ENCODE measurements at regions of chr2 and their contacts with region 1.

Region 1: GRCh38 chr2:96760036-96760985 is at the start of gene CNNM4:
- DNase-seq: peak; percentile 96
- ATAC-seq: peak; percentile 85
- H3K4me3 Mint-ChIP-seq: peak within 1 kb of the TSS; percentile 67
- H3K27ac Mint-ChIP-seq: peak within 1 kb of the TSS; percentile 91
- H3K4me1 Mint-ChIP-seq: peaks cover 51% of the 10 kb centered on the region
- H3K27me3 Mint-ChIP-seq: peaks cover 16% of the 10 kb centered on the region
- CTCF ChIP-seq: no peak
- total RNA-seq, gene CNNM4: 13.9 to 14.3 TPM (median 14.0 TPM) in 3 replicates

Region 2: DNA sequence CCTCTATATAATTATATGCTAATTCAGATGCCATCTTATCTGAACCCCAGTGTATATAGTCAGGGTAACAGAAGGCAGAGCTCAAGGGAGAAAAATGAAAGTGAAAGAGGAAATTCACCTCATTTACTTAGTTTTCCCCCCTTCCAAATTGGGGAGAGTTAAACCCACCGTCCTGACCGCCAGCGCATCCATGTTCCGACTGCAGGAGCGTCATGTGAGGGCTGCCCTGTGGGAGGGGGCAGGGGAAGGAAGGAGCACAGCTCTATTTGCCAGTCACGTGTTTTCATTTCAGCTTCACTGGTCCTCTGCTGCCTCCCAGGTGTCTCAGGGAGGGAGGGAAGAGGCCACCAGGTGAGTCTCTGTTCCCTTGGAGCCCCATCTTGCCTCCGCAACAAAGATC is 13.6 kb after region 1 on chr2:
- CTCF ChIA-PET with region 1: interaction called, 36 read pairs
- POLR2A ChIA-PET with region 1: interaction called, 6 read pairs
- DNase-seq: no peak
- ATAC-seq: peak; percentile 62
- H3K4me3 Mint-ChIP-seq: no peak overlapping the region
- H3K27ac Mint-ChIP-seq: no peak overlapping the region
- H3K4me1 Mint-ChIP-seq: peaks cover 18% of the 10 kb centered on the region
- H3K27me3 Mint-ChIP-seq: no peaks in the 10 kb centered on the region
- CTCF ChIP-seq: no peak

Region 3: DNA sequence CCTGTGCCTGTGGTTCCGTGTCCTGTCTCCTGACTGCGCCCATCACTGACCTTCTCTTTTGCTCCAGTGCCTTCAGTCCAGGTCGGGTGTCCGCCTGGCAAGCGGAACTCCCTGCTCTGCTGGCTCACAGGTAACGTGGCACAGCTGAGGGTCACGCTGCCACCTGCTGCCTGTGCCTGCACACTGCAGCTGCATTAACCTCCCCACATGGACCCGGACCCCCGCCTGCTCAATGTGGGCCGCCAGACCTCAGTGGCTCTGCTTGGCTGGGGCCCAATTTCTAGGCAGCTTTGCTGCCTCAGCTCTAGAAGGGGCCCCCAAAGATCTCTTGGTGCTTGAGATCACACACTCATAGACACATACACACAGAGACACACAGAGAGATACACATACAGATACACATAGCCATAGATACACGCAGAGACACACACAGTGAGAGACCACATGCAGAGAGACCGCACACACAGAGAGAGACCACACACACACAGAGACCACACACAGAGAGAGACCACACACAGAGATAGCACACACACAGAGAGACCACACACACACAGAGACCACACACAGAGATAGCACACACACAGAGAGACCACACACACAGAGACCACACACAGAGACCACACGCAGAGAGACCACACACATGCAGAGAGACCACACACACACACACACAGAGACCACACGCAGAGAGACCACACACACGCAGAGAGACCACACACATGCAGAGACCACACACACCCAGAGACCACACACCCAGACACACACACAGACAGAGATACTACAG is 40.9 kb after region 1 on chr2:
- CTCF ChIA-PET with region 1: interaction called, 37 read pairs
- POLR2A ChIA-PET with region 1: no interaction called
- DNase-seq: peak; percentile 84
- ATAC-seq: peak; percentile 96
- H3K4me3 Mint-ChIP-seq: no peak overlapping the region
- H3K27ac Mint-ChIP-seq: no peak overlapping the region
- H3K4me1 Mint-ChIP-seq: no peaks in the 10 kb centered on the region
- H3K27me3 Mint-ChIP-seq: no peaks in the 10 kb centered on the region
- CTCF ChIP-seq: peak; percentile 79

Measured in WTC11 (cell line).